ENCODE measurements at regions of chr4 and their contacts with region 1.

Region 1: GRCh38 chr4:4248029-4248884 is at the start of gene TMEM128:
- DNase-seq: peak; percentile 87 to 96 (median 90)
- ATAC-seq: peak; percentile 96
- H3K4me3 ChIP-seq: peak within 1 kb of the TSS; percentile 88
- H3K4me3 Mint-ChIP-seq: peak within 1 kb of the TSS; percentile 89
- H3K27ac ChIP-seq: peak within 1 kb of the TSS; percentile 83 to 94
- H3K27ac Mint-ChIP-seq: peak within 1 kb of the TSS; percentile 99
- H3K4me1 ChIP-seq: peaks cover 21% of the 10 kb centered on the region
- H3K4me1 Mint-ChIP-seq: peaks cover 40% of the 10 kb centered on the region
- H3K27me3 ChIP-seq: no peaks in the 10 kb centered on the region
- H3K27me3 Mint-ChIP-seq: peaks cover 3% of the 10 kb centered on the region
- CTCF ChIP-seq: no peak
- total RNA-seq, gene TMEM128: 6.0 to 6.9 TPM

Region 2: GRCh38 chr4:4289941-4290850 is 41.9 kb after region 1 on chr4 and contains the starts of genes LYAR and ZBTB49:
- CTCF ChIA-PET with region 1: interaction called, 3 read pairs
- POLR2A ChIA-PET with region 1: interaction called, 16 read pairs
- intact Hi-C with region 1: loop called (anchors 1 to 5 kb)
- DNase-seq: peak; percentile 94 to 98 (median 96)
- ATAC-seq: peak; percentile 92
- H3K4me3 ChIP-seq: peak within 1 kb of the TSS; percentile 87
- H3K4me3 Mint-ChIP-seq: peak within 1 kb of the TSS; percentile 98
- H3K27ac ChIP-seq: peak within 1 kb of the TSS; percentile 55 to 72
- H3K27ac Mint-ChIP-seq: peak within 1 kb of the TSS; percentile 92
- H3K4me1 ChIP-seq: peaks cover 49% of the 10 kb centered on the region
- H3K4me1 Mint-ChIP-seq: peaks cover 65% of the 10 kb centered on the region
- H3K27me3 ChIP-seq: no peaks in the 10 kb centered on the region
- H3K27me3 Mint-ChIP-seq: no peaks in the 10 kb centered on the region
- CTCF ChIP-seq: no peak
- total RNA-seq, gene LYAR: 13.8 to 13.9 TPM
- total RNA-seq, gene ZBTB49: 6.6 to 8.8 TPM

Region 3: DNA sequence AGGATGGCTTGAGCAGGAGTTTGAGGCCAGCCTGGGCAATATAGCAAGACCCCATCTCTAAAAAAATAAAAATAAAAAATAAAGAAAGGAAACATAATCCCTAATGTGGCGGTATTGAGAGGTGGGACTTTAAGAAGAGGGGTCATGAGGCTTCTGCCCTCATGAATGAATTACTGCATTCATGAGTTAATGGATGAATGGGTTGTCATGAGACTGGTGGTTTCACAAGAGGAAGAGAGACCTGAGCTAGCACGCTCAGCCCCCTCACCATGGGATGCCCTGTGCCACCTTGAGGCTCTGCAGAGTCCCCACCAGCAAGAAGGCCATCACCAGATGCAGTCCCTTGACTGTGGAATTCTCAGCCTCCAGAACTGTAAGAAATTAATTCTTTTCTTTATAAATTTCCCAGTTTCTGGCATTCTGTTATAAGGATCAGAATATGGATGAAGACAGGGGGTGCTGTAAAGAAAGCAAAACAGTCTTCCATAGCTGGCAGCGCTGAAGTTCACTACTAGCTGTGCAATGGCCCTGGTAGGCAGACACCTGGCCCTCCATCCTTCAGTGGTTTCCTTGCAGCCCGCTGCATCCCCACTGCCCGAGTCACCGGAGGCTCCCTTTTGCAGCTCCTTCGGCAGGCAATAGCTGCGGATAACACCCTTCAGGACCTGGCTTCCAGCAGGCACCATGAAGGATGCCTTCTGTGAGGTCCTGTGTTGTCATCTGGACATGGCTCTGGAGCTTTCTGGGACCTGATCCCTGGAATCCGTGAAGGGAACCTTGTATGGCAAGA is 93.8 kb after region 1 on chr4:
- CTCF ChIA-PET with region 1: interaction called, 4 read pairs
- POLR2A ChIA-PET with region 1: interaction called, 10 read pairs
- intact Hi-C with region 1: no loop called
- DNase-seq: no peak
- ATAC-seq: no peak
- H3K4me3 ChIP-seq: no peak overlapping the region
- H3K4me3 Mint-ChIP-seq: no peak overlapping the region
- H3K27ac ChIP-seq: no peak overlapping the region
- H3K27ac Mint-ChIP-seq: no peak overlapping the region
- H3K4me1 ChIP-seq: no peaks in the 10 kb centered on the region
- H3K4me1 Mint-ChIP-seq: peaks cover 17% of the 10 kb centered on the region
- H3K27me3 ChIP-seq: no peaks in the 10 kb centered on the region
- H3K27me3 Mint-ChIP-seq: no peaks in the 10 kb centered on the region
- CTCF ChIP-seq: no peak

Region 4: DNA sequence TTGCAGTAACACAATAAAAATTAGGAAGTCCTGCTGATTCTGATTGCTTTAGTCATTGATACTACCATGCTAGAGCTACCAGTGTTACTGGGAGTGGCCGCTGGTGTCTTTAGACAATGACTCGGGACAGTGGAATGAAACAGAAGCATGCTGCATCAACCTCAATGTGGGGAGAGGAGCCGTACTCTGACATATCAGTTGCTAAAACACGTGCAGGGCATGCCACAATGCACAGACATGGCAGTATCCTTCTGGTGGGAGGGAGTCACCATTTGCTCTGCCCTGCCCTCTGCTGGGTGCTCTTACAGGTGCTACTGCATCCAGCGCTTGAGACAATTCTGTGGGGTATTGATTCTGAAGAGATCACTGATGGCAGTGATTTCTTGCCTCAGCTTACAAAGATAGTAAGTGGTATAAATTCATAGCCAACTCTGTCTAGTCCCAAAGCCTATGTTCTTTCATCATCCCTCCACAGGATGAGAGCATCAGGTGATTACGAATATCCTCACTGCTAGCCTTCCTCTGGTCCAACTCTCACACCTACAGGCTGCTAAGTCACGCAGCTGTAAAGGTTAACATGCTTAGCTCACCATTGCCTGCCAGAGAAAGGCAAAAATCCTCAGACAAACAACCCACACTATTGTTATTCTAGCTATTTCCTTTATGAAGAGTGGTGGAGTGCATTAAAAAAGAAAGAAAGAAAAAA is 182.4 kb after region 1 on chr4:
- CTCF ChIA-PET with region 1: no interaction called
- POLR2A ChIA-PET with region 1: interaction called, 3 read pairs
- intact Hi-C with region 1: loop called in 1 of 2 experiments (anchors 2 kb)
- DNase-seq: peak in 13 of 14 experiments; percentile 19 to 73 (median 47)
- ATAC-seq: peak; percentile 99
- H3K4me3 ChIP-seq: no peak overlapping the region
- H3K4me3 Mint-ChIP-seq: no peak overlapping the region
- H3K27ac ChIP-seq: no peak overlapping the region
- H3K27ac Mint-ChIP-seq: no peak overlapping the region
- H3K4me1 ChIP-seq: peaks cover 4% of the 10 kb centered on the region
- H3K4me1 Mint-ChIP-seq: peaks cover 16% of the 10 kb centered on the region
- H3K27me3 ChIP-seq: no peaks in the 10 kb centered on the region
- H3K27me3 Mint-ChIP-seq: no peaks in the 10 kb centered on the region
- CTCF ChIP-seq: peak; percentile 74

Region 5: GRCh38 chr4:4541661-4542570 is 293.7 kb after region 1 on chr4 and contains the start of gene STX18:
- CTCF ChIA-PET with region 1: no interaction called
- POLR2A ChIA-PET with region 1: interaction called, 12 read pairs
- intact Hi-C with region 1: loop called (anchors 1 to 5 kb)
- DNase-seq: peak; percentile 74 to 93 (median 86)
- ATAC-seq: peak; percentile 92
- H3K4me3 ChIP-seq: peak within 1 kb of the TSS; percentile 92
- H3K4me3 Mint-ChIP-seq: peak within 1 kb of the TSS; percentile 98
- H3K27ac ChIP-seq: peak within 1 kb of the TSS; percentile 58 to 81
- H3K27ac Mint-ChIP-seq: peak within 1 kb of the TSS; percentile 97
- H3K4me1 ChIP-seq: peaks cover 32% of the 10 kb centered on the region
- H3K4me1 Mint-ChIP-seq: peaks cover 69% of the 10 kb centered on the region
- H3K27me3 ChIP-seq: no peaks in the 10 kb centered on the region
- H3K27me3 Mint-ChIP-seq: no peaks in the 10 kb centered on the region
- CTCF ChIP-seq: no peak
- total RNA-seq, gene STX18: 15.2 to 15.5 TPM